Activated naive CD4-positive, alpha-beta T cell treated with anti-CD3 and anti-CD28 coated beads for 36 hours (primary cell): ENCODE measurements at regions of chr14 and their contacts with region 1.

Region 1: DNA sequence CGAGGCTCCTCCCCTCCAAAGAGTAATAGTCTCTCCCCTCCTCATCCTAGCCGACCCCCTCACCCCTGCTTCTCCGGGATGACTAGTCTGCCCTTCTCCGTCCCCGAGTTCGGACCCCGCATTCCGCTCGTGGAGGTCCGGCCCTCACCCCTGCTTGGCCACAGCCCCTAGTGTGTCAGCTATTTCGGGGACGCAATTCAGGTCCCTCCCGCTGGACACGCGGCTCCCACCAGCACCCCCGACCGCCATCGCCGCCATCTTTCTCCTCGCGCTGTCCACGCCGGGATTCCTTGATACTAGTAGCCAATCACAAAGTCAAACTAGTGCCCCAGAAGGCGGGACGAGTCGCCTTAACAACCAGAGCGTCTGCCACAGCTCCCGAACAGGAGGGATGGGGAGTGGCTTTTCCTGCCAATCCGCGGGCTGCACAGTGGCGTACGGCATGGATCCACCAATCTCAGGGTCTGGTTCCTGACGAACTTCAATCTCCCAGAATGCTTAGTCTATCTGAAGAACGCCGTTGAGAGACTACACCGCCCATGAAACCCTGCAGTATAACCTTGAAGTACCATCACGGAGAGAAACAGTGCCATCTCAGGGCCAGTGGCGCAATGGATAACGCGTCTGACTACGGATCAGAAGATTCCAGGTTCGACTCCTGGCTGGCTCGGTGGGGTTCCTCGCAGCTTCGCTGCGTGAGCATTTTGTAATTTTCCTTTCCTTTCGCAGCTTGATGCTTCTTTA is at the start of gene PRMT5:
- DNase-seq: peak; percentile 99
- H3K4me3 Mint-ChIP-seq: no peak within 1 kb of the TSS
- H3K27ac Mint-ChIP-seq: no peak within 1 kb of the TSS
- H3K4me1 Mint-ChIP-seq: peaks cover 34% of the 10 kb centered on the region
- H3K27me3 Mint-ChIP-seq: no peaks in the 10 kb centered on the region
- total RNA-seq, gene PRMT5: 81.0 to 92.8 TPM

Region 2: DNA sequence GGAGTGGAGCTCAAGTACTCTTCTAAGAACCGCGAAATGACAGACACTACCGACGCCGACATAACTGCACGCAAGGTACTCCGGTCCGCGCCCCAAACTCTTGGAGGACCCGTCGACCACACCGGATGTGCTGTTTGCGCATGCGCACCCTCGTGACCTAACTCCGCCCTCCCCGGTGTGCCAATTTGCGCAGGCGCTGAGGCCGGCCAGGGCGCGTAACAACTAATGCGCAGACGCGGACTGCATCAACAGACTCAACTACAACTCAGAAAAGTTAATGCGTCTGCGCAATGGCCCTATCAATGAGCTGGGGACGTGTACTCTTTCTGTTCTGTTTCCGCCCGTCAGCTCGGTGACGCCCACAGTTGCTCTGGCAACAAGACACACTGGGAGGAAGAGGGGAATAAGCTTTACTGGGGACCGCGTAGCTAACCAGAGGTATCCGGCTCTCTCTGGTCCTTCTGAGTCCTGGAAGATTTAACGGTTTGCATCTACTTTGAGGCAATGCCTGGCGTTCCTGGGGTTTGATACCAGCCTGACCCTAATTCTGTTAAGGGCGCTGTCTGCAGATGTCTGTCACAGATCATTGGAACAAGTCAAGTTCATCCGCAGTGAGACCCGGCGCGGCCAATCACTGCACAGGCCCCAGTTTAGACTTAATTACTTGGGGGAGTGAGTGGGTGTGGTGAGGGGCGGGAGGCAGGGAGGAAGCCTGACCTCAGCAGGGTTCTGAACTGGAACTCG is 340.0 kb before region 1 on chr14 and contains the start of gene DAD1:
- CTCF ChIA-PET with region 1: no interaction called
- intact Hi-C with region 1: loop called (anchors 1 kb)
- DNase-seq: peak; percentile 100
- H3K4me3 Mint-ChIP-seq: peak within 1 kb of the TSS; percentile 98
- H3K27ac Mint-ChIP-seq: peak within 1 kb of the TSS; percentile 99
- H3K4me1 Mint-ChIP-seq: peaks cover 68% of the 10 kb centered on the region
- H3K27me3 Mint-ChIP-seq: no peaks in the 10 kb centered on the region
- total RNA-seq, gene DAD1: 219 to 226 TPM

Region 3: DNA sequence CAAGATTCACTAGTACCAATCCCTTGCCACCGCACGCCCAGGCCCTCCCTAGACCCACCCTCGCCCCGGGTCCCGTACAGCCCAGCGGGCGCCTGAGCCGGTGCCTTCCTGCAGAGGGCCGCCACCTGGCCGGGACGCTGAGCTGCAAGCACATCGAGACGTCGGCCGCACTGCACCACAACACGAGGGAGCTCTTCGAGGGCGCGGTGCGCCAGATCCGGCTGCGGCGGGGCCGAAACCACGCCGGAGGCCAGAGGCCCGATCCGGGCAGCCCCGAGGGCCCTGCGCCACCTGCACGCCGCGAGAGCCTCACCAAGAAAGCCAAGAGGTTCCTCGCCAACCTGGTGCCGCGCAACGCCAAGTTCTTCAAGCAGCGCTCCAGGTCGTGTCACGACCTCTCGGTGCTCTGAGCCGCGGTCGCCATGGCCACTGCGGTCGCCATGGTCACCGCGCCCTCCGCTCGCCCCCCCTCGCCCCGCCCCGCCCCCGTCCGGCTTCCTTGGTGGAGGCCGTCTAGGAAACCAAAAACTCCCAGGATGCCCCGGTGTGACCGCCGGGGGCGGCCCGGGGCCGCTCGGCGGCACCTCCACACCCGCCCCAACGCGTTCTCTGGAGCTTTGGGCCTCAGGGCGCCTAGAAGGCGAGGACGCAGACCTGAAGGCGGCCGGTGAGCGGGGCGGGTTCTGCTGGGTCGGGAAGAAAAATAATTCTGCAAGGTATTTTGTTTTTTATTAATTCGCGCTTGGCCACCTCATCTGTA is 42.6 kb before region 1 on chr14:
- CTCF ChIA-PET with region 1: interaction called, 5 read pairs
- intact Hi-C with region 1: loop called (anchors 1 kb)
- DNase-seq: peak; percentile 87
- H3K4me3 Mint-ChIP-seq: peak overlapping the region; percentile 83
- H3K27ac Mint-ChIP-seq: peak overlapping the region; percentile 84
- H3K4me1 Mint-ChIP-seq: peaks cover 50% of the 10 kb centered on the region
- H3K27me3 Mint-ChIP-seq: peaks cover 2% of the 10 kb centered on the region

Region 4: DNA sequence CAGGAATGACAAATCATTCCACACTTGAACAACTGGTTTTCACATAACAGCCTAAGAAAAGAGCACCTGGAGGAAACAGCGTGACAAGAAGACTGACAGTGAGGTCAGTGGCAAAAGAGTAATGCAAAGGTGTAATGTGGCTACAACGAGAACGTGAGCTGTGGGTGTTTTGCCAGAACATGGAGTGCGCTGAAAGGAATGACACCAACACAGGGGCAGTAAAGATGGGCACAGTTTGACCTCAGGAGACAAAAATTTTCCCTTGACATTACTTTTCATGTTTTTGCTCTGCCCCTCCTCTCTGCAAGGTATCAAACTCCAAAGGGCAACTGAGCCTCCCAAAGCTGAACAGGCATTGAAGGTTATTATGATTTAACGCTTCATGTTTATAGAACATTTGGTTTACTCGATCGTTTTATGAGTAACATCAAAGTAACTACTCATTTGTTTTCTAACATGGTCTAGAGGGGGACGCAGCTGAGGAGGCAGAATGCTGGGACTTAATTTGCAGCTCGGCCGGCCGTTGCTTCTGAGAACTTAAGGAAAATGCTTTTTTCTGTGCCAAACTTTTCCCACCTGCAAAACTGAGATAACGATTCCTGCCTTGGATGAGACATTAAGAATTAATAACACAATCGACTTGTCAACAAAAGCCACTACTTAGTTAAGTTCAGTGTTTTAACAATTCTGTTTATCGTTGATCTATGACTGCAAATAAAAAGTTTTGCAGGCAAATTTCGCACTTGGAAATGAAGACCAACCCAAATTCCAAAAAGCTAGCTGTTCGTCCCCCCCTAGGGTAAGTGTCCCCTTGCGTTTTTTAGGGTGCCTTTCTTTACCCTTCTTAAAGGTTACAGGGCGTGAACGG is 26.7 kb after region 1 on chr14:
- CTCF ChIA-PET with region 1: interaction called, 38 read pairs
- intact Hi-C with region 1: loop called (anchors 1 kb)
- DNase-seq: no peak
- H3K4me3 Mint-ChIP-seq: peak overlapping the region; percentile 89
- H3K27ac Mint-ChIP-seq: peak overlapping the region; percentile 84
- H3K4me1 Mint-ChIP-seq: peaks cover 22% of the 10 kb centered on the region
- H3K27me3 Mint-ChIP-seq: no peaks in the 10 kb centered on the region

Region 5: GRCh38 chr14:23006544-23007419 is 77.5 kb after region 1 on chr14:
- CTCF ChIA-PET with region 1: interaction called, 9 read pairs
- intact Hi-C with region 1: loop called (anchors 1 kb)
- DNase-seq: peak; percentile 99
- H3K4me3 Mint-ChIP-seq: peak overlapping the region; percentile 96
- H3K27ac Mint-ChIP-seq: peak overlapping the region; percentile 98
- H3K4me1 Mint-ChIP-seq: peaks cover 36% of the 10 kb centered on the region
- H3K27me3 Mint-ChIP-seq: no peaks in the 10 kb centered on the region

Region 6: DNA sequence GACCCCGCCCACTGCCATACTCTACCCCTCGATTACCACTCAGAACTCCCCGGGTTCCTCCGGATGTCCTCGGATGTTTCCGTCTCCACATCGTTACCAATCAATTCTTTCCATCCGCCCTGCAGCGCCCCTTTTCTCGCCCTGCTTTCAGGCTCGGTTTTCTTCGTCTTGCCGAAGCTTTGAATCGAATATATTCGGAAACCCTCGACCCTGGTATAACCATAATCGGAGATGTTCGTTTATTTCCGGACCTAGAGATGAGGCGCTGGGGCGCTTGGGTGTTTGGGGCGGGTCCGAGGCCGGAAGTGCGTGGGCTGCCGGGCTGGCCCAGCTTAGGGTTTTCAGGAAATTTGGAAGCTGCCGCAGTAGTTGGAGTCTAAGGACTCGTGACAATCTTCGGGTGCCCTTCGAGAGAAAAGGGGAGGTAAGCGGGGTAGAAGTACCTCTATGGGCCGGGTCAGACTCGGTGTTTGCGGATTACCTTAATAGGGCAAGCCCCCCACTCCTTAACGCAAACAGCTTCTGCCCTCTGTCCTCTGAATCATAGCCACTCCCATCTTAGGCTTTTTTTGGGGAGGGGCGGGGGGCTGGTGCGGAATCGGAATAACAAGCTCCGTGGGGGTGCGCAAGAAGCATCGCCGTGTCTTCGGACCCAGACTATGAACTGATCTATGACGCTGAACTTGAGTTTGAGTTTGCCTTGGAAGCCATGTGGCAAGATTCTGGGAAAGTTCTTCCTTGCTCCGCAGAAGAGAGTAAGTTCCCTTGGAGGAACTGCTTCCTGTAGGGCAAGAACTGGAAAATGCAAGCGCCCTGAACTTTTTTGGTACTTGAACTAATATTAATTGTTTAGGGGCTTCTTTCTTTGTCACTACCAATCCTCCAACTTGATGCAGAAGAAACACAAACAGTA is 166.2 kb after region 1 on chr14 and contains the start of gene C14orf119:
- CTCF ChIA-PET with region 1: no interaction called
- intact Hi-C with region 1: loop called (anchors 1 kb)
- DNase-seq: peak; percentile 100
- H3K4me3 Mint-ChIP-seq: no peak within 1 kb of the TSS
- H3K27ac Mint-ChIP-seq: no peak within 1 kb of the TSS
- H3K4me1 Mint-ChIP-seq: peaks cover 38% of the 10 kb centered on the region
- H3K27me3 Mint-ChIP-seq: no peaks in the 10 kb centered on the region
- total RNA-seq, gene C14orf119: 39.8 to 44.2 TPM